Right cardiac atrium (tissue), 5 donors: ENCODE measurements at regions of chr17 and their contacts with region 1.

Region 1: GRCh38 chr17:42405963-42406495 is 17.0 kb downstream of the CAVIN1 start:
- DNase-seq: peak; percentile 85 to 95 (median 94)
- ATAC-seq: peak; percentile 68 to 69
- H3K4me3 ChIP-seq: no peak overlapping the region
- H3K27ac ChIP-seq: peak overlapping the region; percentile 92
- H3K4me1 ChIP-seq: peaks cover 20% of the 10 kb centered on the region
- H3K27me3 ChIP-seq: no peaks in the 10 kb centered on the region

Region 2: GRCh38 chr17:42312285-42313130 is 93.5 kb before region 1 on chr17:
- intact Hi-C with region 1: loop called in 2 of 4 experiments (anchors 5 kb)
- DNase-seq: peak; percentile 90 to 95 (median 95)
- ATAC-seq: peak; percentile 79 to 81
- H3K4me3 ChIP-seq: no peak overlapping the region
- H3K27ac ChIP-seq: no peak overlapping the region
- H3K4me1 ChIP-seq: peaks cover 3% of the 10 kb centered on the region
- H3K27me3 ChIP-seq: no peaks in the 10 kb centered on the region